ENCODE measurements at regions of chr3 and their contacts with region 1.

Region 1: DNA sequence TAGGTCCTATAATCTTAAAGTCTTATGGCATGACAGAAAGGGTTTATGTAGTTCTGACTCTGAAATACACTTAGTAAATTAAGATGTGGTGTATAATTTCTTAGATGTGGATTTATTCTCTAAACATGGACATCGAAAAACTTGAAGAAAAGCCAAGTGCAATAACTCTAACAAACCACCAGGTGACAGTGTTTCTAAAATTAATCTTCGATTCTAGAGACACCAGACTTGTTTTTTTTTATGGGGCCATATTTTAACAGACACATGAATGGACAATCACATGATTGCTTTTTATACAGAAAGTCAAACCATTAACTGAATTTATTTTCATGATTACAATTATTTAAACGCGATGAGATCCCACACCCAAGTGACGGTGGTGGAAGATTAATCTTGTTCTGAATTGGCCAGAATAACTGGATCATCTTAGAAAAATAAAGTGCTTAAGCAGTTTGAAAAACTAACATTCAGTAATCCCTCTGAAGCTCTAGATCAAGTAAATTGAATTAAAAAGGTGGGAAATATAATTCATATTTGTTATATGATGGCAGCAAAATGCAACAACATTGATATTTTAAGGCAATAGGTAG is 305.1 kb downstream of the LSAMP start:
- DNase-seq: peak; percentile 10 to 27 (median 18)
- ATAC-seq: no peak; the same call in 2 of the 3 replicates
- H3K4me3 ChIP-seq: no peak overlapping the region
- H3K27ac ChIP-seq: no peak overlapping the region
- H3K4me1 ChIP-seq: no peaks in the 10 kb centered on the region
- H3K27me3 ChIP-seq: no peaks in the 10 kb centered on the region
- CTCF ChIP-seq: peak; percentile 43 to 73 (median 52); a peak in 4 of 6 replicates
- EP300 ChIP-seq: no peak
- POLR2A ChIP-seq: no peak
- RAD21 ChIP-seq: peak; percentile 62 to 74

Region 2: DNA sequence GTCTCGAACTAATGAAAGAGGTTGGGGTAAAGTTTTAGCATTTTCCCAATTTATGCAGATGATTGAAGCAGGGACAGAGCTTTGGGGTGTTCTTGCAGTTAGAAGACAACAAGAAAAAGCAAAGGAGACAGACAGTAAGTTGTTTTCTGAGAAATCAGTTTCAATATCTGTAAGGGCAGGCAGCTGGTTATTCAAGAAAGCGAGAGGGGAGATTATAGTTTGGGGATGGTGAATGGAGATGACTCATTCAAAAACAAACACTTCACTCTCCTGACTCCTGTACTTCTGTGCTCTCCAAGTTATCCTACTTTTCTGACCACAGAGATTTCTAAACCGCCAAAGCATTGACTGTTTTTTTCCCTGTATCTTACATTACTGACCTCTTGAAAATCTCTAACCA is 164.8 kb before region 1 on chr3:
- CTCF ChIA-PET with region 1: no interaction called
- POLR2A ChIA-PET with region 1: no interaction called
- in situ Hi-C with region 1: no loop called
- intact Hi-C with region 1: loop called (anchors 5 kb)
- DNase-seq: peak in 2 of 4 experiments; percentile 22 to 37
- ATAC-seq: peak; percentile 68
- H3K4me3 ChIP-seq: no peak overlapping the region
- H3K27ac ChIP-seq: no peak overlapping the region
- H3K4me1 ChIP-seq: peaks cover 0 to 6% of the 10 kb centered on the region in 2 experiments; a peak in 1 of 5 replicates
- H3K27me3 ChIP-seq: no peaks in the 10 kb centered on the region
- CTCF ChIP-seq: no peak
- EP300 ChIP-seq: no peak
- POLR2A ChIP-seq: no peak
- RAD21 ChIP-seq: no peak

Region 3: GRCh38 chr3:116070061-116070460 is 70.1 kb before region 1 on chr3:
- CTCF ChIA-PET with region 1: no interaction called
- POLR2A ChIA-PET with region 1: no interaction called
- in situ Hi-C with region 1: no loop called
- intact Hi-C with region 1: no loop called
- DNase-seq: no peak
- ATAC-seq: no peak
- H3K4me3 ChIP-seq: no peak overlapping the region
- H3K27ac ChIP-seq: no peak overlapping the region
- H3K4me1 ChIP-seq: peaks cover 0 to 10% of the 10 kb centered on the region in 2 experiments; a peak in 2 of 5 replicates
- H3K27me3 ChIP-seq: no peaks in the 10 kb centered on the region
- CTCF ChIP-seq: no peak
- EP300 ChIP-seq: no peak
- POLR2A ChIP-seq: no peak
- RAD21 ChIP-seq: no peak

Region 4: DNA sequence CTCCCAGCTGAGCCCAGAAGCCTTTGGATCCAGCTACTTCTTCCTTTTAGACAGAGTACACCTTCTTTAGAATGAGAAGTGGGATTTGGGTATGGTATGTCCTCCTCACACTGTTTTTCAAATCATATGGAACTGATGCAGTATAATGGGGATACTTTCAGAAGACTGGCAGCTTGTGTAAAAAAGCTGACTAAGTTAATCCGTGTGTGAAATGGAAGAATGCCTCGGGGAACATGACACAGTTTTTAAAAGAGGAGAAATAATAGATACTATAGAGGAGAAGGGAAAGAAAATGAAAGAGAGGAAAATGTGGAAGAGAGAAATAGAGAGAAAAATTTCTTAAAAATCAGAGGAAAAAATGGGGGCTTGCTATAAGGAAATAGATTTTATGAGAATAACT is 617.1 kb after region 1 on chr3:
- CTCF ChIA-PET with region 1: no interaction called
- POLR2A ChIA-PET with region 1: no interaction called
- in situ Hi-C with region 1: loop called (anchors 25 kb)
- intact Hi-C with region 1: loop called (anchors 1 kb)
- DNase-seq: no peak
- ATAC-seq: no peak
- H3K4me3 ChIP-seq: no peak overlapping the region
- H3K27ac ChIP-seq: no peak overlapping the region
- H3K4me1 ChIP-seq: no peaks in the 10 kb centered on the region
- H3K27me3 ChIP-seq: no peaks in the 10 kb centered on the region
- CTCF ChIP-seq: no peak
- EP300 ChIP-seq: no peak
- POLR2A ChIP-seq: no peak
- RAD21 ChIP-seq: no peak

Region 5: DNA sequence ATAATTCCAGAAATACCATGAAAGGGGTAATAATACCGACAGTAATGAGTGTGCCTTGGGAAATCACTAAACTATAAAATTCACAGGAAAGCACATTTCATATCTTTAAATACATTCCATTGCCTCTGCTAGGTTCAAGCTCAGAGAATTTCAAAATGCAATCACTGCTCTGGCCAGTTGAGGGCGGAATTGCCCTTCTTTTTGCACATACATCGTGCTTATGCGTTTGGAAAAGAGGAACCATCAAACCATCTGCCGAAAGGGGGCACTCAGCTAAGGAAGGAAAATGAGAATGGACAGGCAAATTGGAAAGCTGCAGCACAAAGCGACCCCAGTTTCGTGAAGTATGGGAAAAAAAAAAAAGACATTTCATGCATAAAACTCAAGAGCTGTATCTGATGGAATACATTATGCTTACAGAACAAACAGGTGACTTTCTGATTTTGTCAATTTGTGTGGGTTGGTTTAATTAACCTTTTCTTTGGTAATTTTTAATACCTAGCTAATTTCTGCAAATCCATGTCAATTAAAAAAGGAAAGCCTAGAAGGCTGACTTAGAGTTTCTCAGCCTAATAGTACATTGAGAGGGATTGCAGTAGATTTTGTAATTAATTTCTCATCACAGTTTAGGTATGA is 630.7 kb after region 1 on chr3:
- CTCF ChIA-PET with region 1: no interaction called
- POLR2A ChIA-PET with region 1: no interaction called
- in situ Hi-C with region 1: loop called (anchors 25 kb)
- intact Hi-C with region 1: no loop called
- DNase-seq: peak; percentile 29 to 67 (median 35)
- ATAC-seq: peak; percentile 86
- H3K4me3 ChIP-seq: no peak overlapping the region
- H3K27ac ChIP-seq: no peak overlapping the region
- H3K4me1 ChIP-seq: no peaks in the 10 kb centered on the region
- H3K27me3 ChIP-seq: no peaks in the 10 kb centered on the region
- CTCF ChIP-seq: peak; percentile 82 to 99 (median 98)
- EP300 ChIP-seq: no peak
- POLR2A ChIP-seq: no peak
- RAD21 ChIP-seq: peak; percentile 74 to 82

Region 6: GRCh38 chr3:117302428-117302827 is 1162.2 kb after region 1 on chr3:
- CTCF ChIA-PET with region 1: no interaction called
- POLR2A ChIA-PET with region 1: no interaction called
- in situ Hi-C with region 1: no loop called
- intact Hi-C with region 1: no loop called
- DNase-seq: no peak
- ATAC-seq: no peak
- H3K4me3 ChIP-seq: no peak overlapping the region
- H3K27ac ChIP-seq: no peak overlapping the region
- H3K4me1 ChIP-seq: no peaks in the 10 kb centered on the region
- H3K27me3 ChIP-seq: no peaks in the 10 kb centered on the region
- CTCF ChIP-seq: no peak
- EP300 ChIP-seq: no peak
- POLR2A ChIP-seq: no peak
- RAD21 ChIP-seq: no peak